ENCODE measurements at regions of chr16 and their contacts with region 1.

Region 1: GRCh38 chr16:89737341-89738071 is 16.2 kb downstream of the ZNF276 start:
- DNase-seq: peak; percentile 68
- ATAC-seq: peak; percentile 58
- H3K4me3 Mint-ChIP-seq: no peak overlapping the region
- H3K27ac Mint-ChIP-seq: peak overlapping the region; percentile 69
- H3K4me1 Mint-ChIP-seq: peaks cover 31% of the 10 kb centered on the region
- H3K27me3 Mint-ChIP-seq: no peaks in the 10 kb centered on the region
- CTCF ChIP-seq: no peak

Region 2: GRCh38 chr16:89721546-89722391 is 15.7 kb before region 1 on chr16:
- CTCF ChIA-PET with region 1: interaction called, 5 read pairs
- POLR2A ChIA-PET with region 1: interaction called, 23 read pairs
- intact Hi-C with region 1: no loop called
- DNase-seq: peak; percentile 85
- ATAC-seq: peak; percentile 17
- H3K4me3 Mint-ChIP-seq: peak overlapping the region; percentile 82
- H3K27ac Mint-ChIP-seq: peak overlapping the region; percentile 86
- H3K4me1 Mint-ChIP-seq: peaks cover 44% of the 10 kb centered on the region
- H3K27me3 Mint-ChIP-seq: no peaks in the 10 kb centered on the region
- CTCF ChIP-seq: no peak

Region 3: GRCh38 chr16:89749647-89750046 is 12.1 kb after region 1 on chr16:
- CTCF ChIA-PET with region 1: interaction called, 3 read pairs
- POLR2A ChIA-PET with region 1: interaction called, 12 read pairs
- intact Hi-C with region 1: no loop called
- DNase-seq: no peak
- ATAC-seq: no peak
- H3K4me3 Mint-ChIP-seq: no peak overlapping the region
- H3K27ac Mint-ChIP-seq: no peak overlapping the region
- H3K4me1 Mint-ChIP-seq: peaks cover 4% of the 10 kb centered on the region
- H3K27me3 Mint-ChIP-seq: no peaks in the 10 kb centered on the region
- CTCF ChIP-seq: no peak

Measured in activated CD8-positive, alpha-beta T cell treated with anti-CD3 and anti-CD28 coated beads for 36 hours (primary cell).